PC-3 (cell line): ENCODE measurements at regions of chr11 and their contacts with region 1.

Region 1: DNA sequence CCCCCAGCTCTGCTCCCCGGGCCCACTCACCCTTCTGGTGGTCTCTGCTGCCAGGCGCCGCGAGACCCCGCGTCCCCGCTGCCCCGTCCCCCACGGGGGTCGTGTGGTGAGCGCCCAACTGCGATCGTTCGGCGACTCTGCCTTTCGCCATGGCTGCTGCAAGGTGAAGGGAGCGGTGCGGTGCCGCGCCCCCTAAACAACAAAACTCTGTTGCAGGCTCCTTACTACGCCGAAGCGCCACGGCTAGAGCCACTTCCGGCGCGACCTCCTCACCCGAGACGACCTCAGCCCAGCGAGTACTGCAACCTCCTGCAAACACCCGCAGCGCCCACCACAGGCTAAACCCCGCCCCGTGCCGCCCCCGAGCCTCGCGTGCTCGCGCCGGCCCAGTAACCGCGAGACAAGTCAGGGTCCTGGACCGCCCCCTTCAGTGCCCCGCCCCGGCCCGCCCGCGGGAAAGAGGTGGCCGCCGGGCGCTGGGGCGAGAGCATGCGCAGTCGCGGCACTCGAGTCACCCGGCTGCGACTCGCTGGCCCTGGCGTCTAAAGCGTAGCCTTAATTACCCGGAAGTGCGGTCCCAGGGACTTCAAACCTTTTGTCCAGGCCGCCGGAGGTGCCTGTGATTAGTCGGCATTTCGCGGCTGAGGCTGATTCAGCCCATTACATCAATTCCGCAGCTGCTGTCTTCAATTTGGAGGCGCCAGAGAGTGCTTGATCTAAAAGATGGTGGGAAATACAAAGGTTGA is at the start of gene TMEM41B:
- DNase-seq: peak; percentile 96
- ATAC-seq: peak; percentile 96
- H3K4me3 ChIP-seq: peak within 1 kb of the TSS; percentile 98
- H3K27ac ChIP-seq: peak within 1 kb of the TSS; percentile 86
- H3K4me1 ChIP-seq: peaks cover 17% of the 10 kb centered on the region
- H3K27me3 ChIP-seq: no peaks in the 10 kb centered on the region
- CTCF ChIP-seq: peak; percentile 25; the same call in 1 of the 2 replicates
- total RNA-seq, gene TMEM41B: 83.6 and 87.6 TPM in 2 replicates

Region 2: GRCh38 chr11:9330387-9331384 is 16.2 kb after region 1 on chr11:
- CTCF ChIA-PET with region 1: interaction called, 11 read pairs
- POLR2A ChIA-PET with region 1: interaction called, 9 read pairs
- intact Hi-C with region 1: no loop called
- DNase-seq: peak; percentile 90
- ATAC-seq: peak; percentile 89
- H3K4me3 ChIP-seq: peak overlapping the region; percentile 6; the same call in 1 of the 2 replicates
- H3K27ac ChIP-seq: peak overlapping the region; percentile 94
- H3K4me1 ChIP-seq: peaks cover 26% of the 10 kb centered on the region
- H3K27me3 ChIP-seq: no peaks in the 10 kb centered on the region
- CTCF ChIP-seq: no peak

Region 3: GRCh38 chr11:9384535-9385303 is 70.3 kb after region 1 on chr11 and contains the start of gene IPO7:
- CTCF ChIA-PET with region 1: no interaction called
- POLR2A ChIA-PET with region 1: interaction called, 3 read pairs
- intact Hi-C with region 1: loop called (anchors 2 kb)
- DNase-seq: peak; percentile 90
- ATAC-seq: peak; percentile 94
- H3K4me3 ChIP-seq: peak within 1 kb of the TSS; percentile 98
- H3K27ac ChIP-seq: peak within 1 kb of the TSS; percentile 82
- H3K4me1 ChIP-seq: peaks cover 9% of the 10 kb centered on the region
- H3K27me3 ChIP-seq: no peaks in the 10 kb centered on the region
- CTCF ChIP-seq: peak; percentile 41
- total RNA-seq, gene IPO7: 78.9 and 109 TPM in 2 replicates